Activated CD8-positive, alpha-beta T cell treated with anti-CD3 and anti-CD28 coated beads for 36 hours (primary cell): ENCODE measurements at regions of chr16 and their contacts with region 1.

Region 1: GRCh38 chr16:75198135-75198600 is 8.8 kb downstream of the CTRB2 start:
- DNase-seq: no peak
- ATAC-seq: no peak
- H3K4me3 Mint-ChIP-seq: no peak overlapping the region
- H3K27ac Mint-ChIP-seq: no peak overlapping the region
- H3K4me1 Mint-ChIP-seq: peaks cover 13% of the 10 kb centered on the region
- H3K27me3 Mint-ChIP-seq: peaks cover 13% of the 10 kb centered on the region
- CTCF ChIP-seq: no peak

Region 2: GRCh38 chr16:74973153-74973703 is 224.9 kb before region 1 on chr16:
- CTCF ChIA-PET with region 1: no interaction called
- POLR2A ChIA-PET with region 1: no interaction called
- intact Hi-C with region 1: no loop called
- DNase-seq: no peak
- ATAC-seq: no peak
- H3K4me3 Mint-ChIP-seq: no peak overlapping the region
- H3K27ac Mint-ChIP-seq: no peak overlapping the region
- H3K4me1 Mint-ChIP-seq: peaks cover 7% of the 10 kb centered on the region
- H3K27me3 Mint-ChIP-seq: no peaks in the 10 kb centered on the region
- CTCF ChIP-seq: no peak

Region 3: GRCh38 chr16:75234856-75235696 is 36.9 kb after region 1 on chr16:
- CTCF ChIA-PET with region 1: interaction called, 88 read pairs
- POLR2A ChIA-PET with region 1: no interaction called
- intact Hi-C with region 1: loop called (anchors 5 kb)
- DNase-seq: no peak
- ATAC-seq: no peak
- H3K4me3 Mint-ChIP-seq: no peak overlapping the region
- H3K27ac Mint-ChIP-seq: no peak overlapping the region
- H3K4me1 Mint-ChIP-seq: peaks cover 5% of the 10 kb centered on the region
- H3K27me3 Mint-ChIP-seq: peaks cover 1% of the 10 kb centered on the region
- CTCF ChIP-seq: no peak

Region 4: DNA sequence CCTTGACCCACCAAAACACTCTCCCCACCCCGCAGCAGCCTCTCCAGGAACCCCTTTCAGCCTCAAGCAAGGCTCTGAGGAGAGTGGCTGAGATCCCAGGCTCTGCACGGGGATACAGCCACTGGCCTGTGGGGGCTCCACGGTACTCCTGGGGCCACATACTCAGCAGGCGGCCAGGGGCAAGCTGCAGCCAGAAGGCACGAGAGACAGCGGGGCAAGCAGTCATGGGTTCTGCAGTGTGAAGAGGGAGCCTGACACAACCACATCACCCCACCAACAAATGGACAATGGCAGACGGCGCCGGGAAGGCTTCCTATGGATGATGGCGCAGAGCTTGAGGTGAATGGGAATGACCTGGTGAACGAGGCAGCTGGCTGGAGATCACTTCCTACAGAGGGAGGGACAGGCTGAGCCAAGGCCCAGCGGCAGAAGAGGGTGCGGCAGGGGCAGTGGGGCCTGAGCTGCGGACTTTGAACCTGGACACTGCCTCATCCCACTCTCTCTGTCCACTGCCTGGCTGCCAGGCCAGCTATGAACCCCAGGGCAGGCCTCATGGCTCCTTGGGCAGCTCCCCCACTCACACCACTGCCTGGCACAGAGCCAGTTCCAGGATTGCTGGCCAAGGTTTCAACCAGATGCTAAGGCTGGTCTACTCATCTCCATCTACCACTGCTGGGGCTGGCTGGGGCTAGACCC is 64.1 kb after region 1 on chr16:
- CTCF ChIA-PET with region 1: no interaction called
- POLR2A ChIA-PET with region 1: no interaction called
- intact Hi-C with region 1: no loop called
- DNase-seq: no peak
- ATAC-seq: no peak
- H3K4me3 Mint-ChIP-seq: no peak overlapping the region
- H3K27ac Mint-ChIP-seq: no peak overlapping the region
- H3K4me1 Mint-ChIP-seq: peaks cover 7% of the 10 kb centered on the region
- H3K27me3 Mint-ChIP-seq: peaks cover 44% of the 10 kb centered on the region
- CTCF ChIP-seq: no peak

Region 5: GRCh38 chr16:75282466-75283288 is 84.5 kb after region 1 on chr16:
- CTCF ChIA-PET with region 1: interaction called, 11 read pairs
- POLR2A ChIA-PET with region 1: no interaction called
- intact Hi-C with region 1: no loop called
- DNase-seq: no peak
- ATAC-seq: no peak
- H3K4me3 Mint-ChIP-seq: no peak overlapping the region
- H3K27ac Mint-ChIP-seq: no peak overlapping the region
- H3K4me1 Mint-ChIP-seq: no peaks in the 10 kb centered on the region
- H3K27me3 Mint-ChIP-seq: peaks cover 27% of the 10 kb centered on the region
- CTCF ChIP-seq: no peak

Region 6: GRCh38 chr16:75379911-75380847 is 182.0 kb after region 1 on chr16:
- CTCF ChIA-PET with region 1: interaction called, 70 read pairs
- POLR2A ChIA-PET with region 1: no interaction called
- intact Hi-C with region 1: loop called (anchors 5 kb)
- DNase-seq: peak; percentile 66
- ATAC-seq: peak; percentile 71
- H3K4me3 Mint-ChIP-seq: peak overlapping the region; percentile 6
- H3K27ac Mint-ChIP-seq: no peak overlapping the region
- H3K4me1 Mint-ChIP-seq: peaks cover 47% of the 10 kb centered on the region
- H3K27me3 Mint-ChIP-seq: peaks cover 2% of the 10 kb centered on the region
- CTCF ChIP-seq: no peak

Region 7: DNA sequence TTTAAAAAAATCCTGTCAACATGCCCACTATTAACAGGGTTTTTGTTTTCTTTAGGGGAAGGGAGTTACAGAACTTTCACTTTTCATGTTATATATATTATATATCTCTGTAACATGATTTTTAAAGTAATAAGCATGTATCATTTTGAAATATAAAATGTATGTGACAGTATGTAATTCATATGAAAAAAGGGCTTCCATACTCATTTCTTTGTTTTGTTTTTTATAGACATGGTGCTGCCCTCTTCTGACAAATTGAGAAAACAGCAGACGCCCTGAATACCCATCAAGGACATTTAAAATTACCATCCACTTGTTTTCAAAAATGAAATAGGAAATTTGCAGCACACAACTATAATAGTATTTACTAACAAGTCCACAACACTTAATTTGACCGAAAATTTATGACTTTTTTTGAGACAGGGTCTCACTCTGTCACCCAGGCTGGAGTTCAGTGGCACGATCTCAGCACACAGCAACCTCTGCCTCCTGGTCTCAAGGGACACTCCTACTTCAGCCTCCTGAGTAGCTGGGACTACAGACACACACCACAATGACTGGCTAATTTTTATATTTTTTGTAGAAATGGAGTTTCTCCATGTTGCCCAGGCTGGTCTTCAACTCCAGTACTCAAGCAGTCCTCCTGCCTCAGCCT is 204.8 kb after region 1 on chr16:
- CTCF ChIA-PET with region 1: interaction called, 48 read pairs
- POLR2A ChIA-PET with region 1: no interaction called
- intact Hi-C with region 1: no loop called
- DNase-seq: peak; percentile 14
- ATAC-seq: peak; percentile 74
- H3K4me3 Mint-ChIP-seq: no peak overlapping the region
- H3K27ac Mint-ChIP-seq: no peak overlapping the region
- H3K4me1 Mint-ChIP-seq: peaks cover 19% of the 10 kb centered on the region
- H3K27me3 Mint-ChIP-seq: no peaks in the 10 kb centered on the region
- CTCF ChIP-seq: peak; percentile 54